ENCODE measurements at regions of chr13 and their contacts with region 1.

Region 1: GRCh38 chr13:24727731-24728601 is 36.0 kb upstream of the RNF17 start:
- DNase-seq: peak; percentile 63
- H3K4me3 Mint-ChIP-seq: no peak overlapping the region
- H3K27ac Mint-ChIP-seq: no peak overlapping the region
- H3K4me1 Mint-ChIP-seq: peaks cover 2% of the 10 kb centered on the region
- H3K27me3 Mint-ChIP-seq: peaks cover 27% of the 10 kb centered on the region

Region 2: GRCh38 chr13:24574847-24575246 is 153.1 kb before region 1 on chr13:
- intact Hi-C with region 1: loop called (anchors 2 kb)
- DNase-seq: no peak
- H3K4me3 Mint-ChIP-seq: no peak overlapping the region
- H3K27ac Mint-ChIP-seq: no peak overlapping the region
- H3K4me1 Mint-ChIP-seq: peaks cover 11% of the 10 kb centered on the region
- H3K27me3 Mint-ChIP-seq: peaks cover 6% of the 10 kb centered on the region

Region 3: GRCh38 chr13:24605923-24606372 is 122.0 kb before region 1 on chr13:
- intact Hi-C with region 1: loop called (anchors 10 kb)
- DNase-seq: no peak
- H3K4me3 Mint-ChIP-seq: no peak overlapping the region
- H3K27ac Mint-ChIP-seq: peak overlapping the region; percentile 49
- H3K4me1 Mint-ChIP-seq: peaks cover 22% of the 10 kb centered on the region
- H3K27me3 Mint-ChIP-seq: no peaks in the 10 kb centered on the region

Region 4: GRCh38 chr13:24683838-24684599 is 43.9 kb before region 1 on chr13:
- intact Hi-C with region 1: loop called (anchors 1 kb)
- DNase-seq: peak; percentile 37
- H3K4me3 Mint-ChIP-seq: no peak overlapping the region
- H3K27ac Mint-ChIP-seq: peak overlapping the region; percentile 38
- H3K4me1 Mint-ChIP-seq: peaks cover 28% of the 10 kb centered on the region
- H3K27me3 Mint-ChIP-seq: peaks cover 47% of the 10 kb centered on the region

Region 5: GRCh38 chr13:24693862-24694471 is 34.0 kb before region 1 on chr13:
- intact Hi-C with region 1: loop called (anchors 1 kb)
- DNase-seq: peak; percentile 35
- H3K4me3 Mint-ChIP-seq: no peak overlapping the region
- H3K27ac Mint-ChIP-seq: no peak overlapping the region
- H3K4me1 Mint-ChIP-seq: peaks cover 4% of the 10 kb centered on the region
- H3K27me3 Mint-ChIP-seq: peaks cover 30% of the 10 kb centered on the region

Region 6: GRCh38 chr13:24709186-24709913 is 18.6 kb before region 1 on chr13:
- intact Hi-C with region 1: loop called (anchors 1 kb)
- DNase-seq: peak; percentile 64
- H3K4me3 Mint-ChIP-seq: peak overlapping the region; percentile 26
- H3K27ac Mint-ChIP-seq: peak overlapping the region; percentile 48
- H3K4me1 Mint-ChIP-seq: peaks cover 15% of the 10 kb centered on the region
- H3K27me3 Mint-ChIP-seq: peaks cover 3% of the 10 kb centered on the region

Measured in activated T-helper 2 cell treated with anti-CD3 and anti-CD28 coated beads, Interferon-gamma antibody, Interleukin-2, Interleukin-4, amounts not matched to agents 10 μg/mL and 5 μg/mL and 100 μg/mL, durations not matched to agents 14 hours and 24 hours and 36 hours (primary cell).